ENCODE measurements at regions of chr16 and their contacts with region 1.

Region 1: DNA sequence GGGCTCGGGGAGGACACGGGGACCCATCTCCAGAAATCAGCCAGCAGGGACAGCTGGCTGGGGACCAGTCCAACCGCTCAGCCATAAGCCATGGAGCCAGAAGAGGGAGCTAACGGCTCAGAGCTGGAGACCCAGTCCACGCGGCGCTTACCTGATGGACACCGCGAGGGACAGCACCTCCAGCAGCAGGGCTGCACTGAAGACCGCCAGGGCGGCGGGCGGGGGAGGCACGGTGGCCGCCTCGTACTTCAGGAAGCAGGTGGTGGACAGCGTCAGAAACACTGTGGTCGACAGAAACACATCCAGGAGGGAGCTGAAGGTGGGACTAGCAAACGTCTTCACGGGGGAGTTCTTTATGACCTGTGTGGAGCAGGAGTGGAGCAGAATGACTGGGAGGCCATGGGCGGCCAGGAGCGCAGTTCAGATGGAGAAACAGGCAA is 102.6 kb upstream of the CREBBP start:
- DNase-seq: peak; percentile 77
- ATAC-seq: peak; percentile 88

Region 2: DNA sequence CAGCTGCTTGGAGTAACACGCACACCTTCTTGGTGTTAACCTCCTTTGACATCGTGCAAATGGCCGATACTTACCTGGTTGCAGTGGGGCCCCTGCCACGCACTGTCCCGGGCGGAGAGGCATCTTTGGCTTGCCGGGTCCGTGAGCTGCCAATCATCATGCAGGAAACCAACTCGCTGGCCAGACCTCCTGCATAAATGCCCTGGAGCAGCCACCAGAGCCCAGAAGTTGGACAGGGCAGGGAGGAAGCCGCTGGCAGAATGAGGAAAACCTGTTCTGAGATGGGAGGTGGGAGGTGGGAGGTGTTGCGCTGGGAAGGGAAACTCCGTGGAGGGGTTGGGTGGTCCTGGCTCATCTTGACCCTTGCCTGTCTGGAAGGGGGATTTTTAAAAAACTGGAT is 60.8 kb before region 1 on chr16:
- intact Hi-C with region 1: no loop called
- DNase-seq: no peak
- ATAC-seq: no peak

Region 3: GRCh38 chr16:4032768-4033167 is 49.7 kb after region 1 on chr16:
- intact Hi-C with region 1: loop called (anchors 10 kb)
- DNase-seq: peak; percentile 65
- ATAC-seq: peak; percentile 71

Region 4: GRCh38 chr16:4081521-4082021 is 98.5 kb after region 1 on chr16:
- intact Hi-C with region 1: no loop called
- DNase-seq: no peak
- ATAC-seq: no peak

Region 5: DNA sequence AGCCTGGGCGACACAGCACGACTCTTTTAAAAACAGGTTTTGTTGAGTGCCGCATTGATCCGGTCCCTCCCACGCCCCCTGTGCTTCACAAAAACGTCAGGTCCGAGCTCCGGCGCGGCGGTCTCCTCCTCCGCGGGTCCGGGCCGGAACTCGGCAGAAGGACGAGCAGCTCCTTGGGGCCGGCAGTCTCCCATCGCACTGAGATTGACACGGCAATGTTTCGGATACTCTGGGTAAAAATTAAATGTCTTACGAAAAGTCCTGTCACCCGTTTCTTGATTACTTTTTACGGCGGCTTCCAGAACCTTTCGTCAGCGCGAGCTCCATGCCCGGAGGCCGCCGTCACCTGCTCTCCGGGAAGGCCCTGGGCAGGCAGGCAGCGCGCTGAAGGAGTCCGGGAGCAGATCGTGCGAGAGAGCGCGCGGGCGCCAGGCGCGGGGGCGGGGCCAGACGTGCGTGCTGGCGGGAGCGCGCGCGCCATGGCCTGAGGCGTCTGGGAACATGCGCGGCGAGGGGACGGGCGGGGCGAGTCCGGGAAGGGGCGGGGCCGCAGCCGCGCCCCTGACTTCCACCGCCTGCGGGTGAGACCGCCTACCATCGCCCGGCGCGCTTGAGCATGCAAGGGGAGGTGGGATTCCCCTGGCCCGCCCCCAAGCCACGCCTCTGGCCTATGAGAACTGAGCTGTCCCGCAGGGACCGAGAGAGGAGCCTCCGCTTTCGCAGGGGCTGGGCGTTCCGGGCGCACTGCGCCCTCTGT is 270.5 kb after region 1 on chr16:
- intact Hi-C with region 1: loop called (anchors 10 kb)
- DNase-seq: peak; percentile 100
- ATAC-seq: peak; percentile 98

Measured in Right ventricle myocardium superior (tissue), 1 donor.